ENCODE measurements at regions of chr9 and their contacts with region 1.

Region 1: GRCh38 chr9:124479947-124480620 is 27.1 kb downstream of the NR5A1 start:
- DNase-seq: no peak
- H3K4me3 ChIP-seq: no peak overlapping the region
- H3K27ac ChIP-seq: no peak overlapping the region
- H3K4me1 ChIP-seq: peaks cover 19% of the 10 kb centered on the region
- H3K27me3 ChIP-seq: no peaks in the 10 kb centered on the region
- CTCF ChIP-seq: no peak

Region 2: DNA sequence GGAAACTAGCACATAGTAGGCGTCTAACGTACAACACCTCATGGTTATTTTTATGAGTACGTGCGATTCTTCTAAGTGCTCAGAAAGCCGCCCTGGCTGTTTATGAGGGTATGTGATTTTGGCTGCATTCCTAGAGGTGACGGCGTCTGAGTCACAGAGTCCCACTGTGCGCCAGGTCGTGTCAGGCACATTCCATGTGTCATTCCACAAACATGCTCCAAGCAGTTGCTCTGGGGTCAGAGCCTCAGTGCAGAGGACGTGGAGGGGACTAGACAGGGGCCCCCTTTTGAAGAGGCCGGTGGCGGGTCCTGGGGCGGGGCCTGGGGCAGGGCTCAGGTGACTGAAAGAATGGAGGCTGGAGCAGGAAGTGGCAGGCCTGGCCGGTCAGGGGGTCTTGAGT is 170.4 kb before region 1 on chr9:
- CTCF ChIA-PET with region 1: no interaction called
- POLR2A ChIA-PET with region 1: no interaction called
- intact Hi-C with region 1: no loop called
- DNase-seq: peak; percentile 45
- H3K4me3 ChIP-seq: no peak overlapping the region
- H3K27ac ChIP-seq: no peak overlapping the region
- H3K4me1 ChIP-seq: peaks cover 10% of the 10 kb centered on the region
- H3K27me3 ChIP-seq: no peaks in the 10 kb centered on the region
- CTCF ChIP-seq: no peak

Region 3: DNA sequence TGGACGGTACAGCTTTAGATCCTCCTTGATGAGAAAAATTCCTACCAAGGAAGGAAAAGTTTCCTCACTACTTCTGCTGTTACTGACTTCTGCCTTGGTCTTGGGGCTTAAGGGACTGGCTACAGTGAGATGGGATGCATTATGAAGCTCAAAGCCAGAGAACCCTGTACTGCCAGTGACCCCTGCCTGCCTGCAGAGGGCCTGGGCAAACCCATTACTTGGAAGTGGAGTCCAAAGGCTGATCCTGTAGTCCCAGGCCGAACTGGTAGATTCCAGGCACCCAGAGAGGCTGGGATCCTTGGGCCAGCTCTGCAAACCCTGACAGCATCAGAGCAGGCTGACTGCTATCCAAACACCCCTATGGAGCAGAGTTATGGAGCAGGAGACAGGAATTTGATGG is 52.8 kb after region 1 on chr9:
- CTCF ChIA-PET with region 1: interaction called, 13 read pairs
- POLR2A ChIA-PET with region 1: no interaction called
- intact Hi-C with region 1: no loop called
- DNase-seq: no peak
- H3K4me3 ChIP-seq: no peak overlapping the region
- H3K27ac ChIP-seq: no peak overlapping the region
- H3K4me1 ChIP-seq: no peaks in the 10 kb centered on the region
- H3K27me3 ChIP-seq: no peaks in the 10 kb centered on the region
- CTCF ChIP-seq: no peak